ENCODE measurements at regions of chr7 and their contacts with region 1.

Region 1: DNA sequence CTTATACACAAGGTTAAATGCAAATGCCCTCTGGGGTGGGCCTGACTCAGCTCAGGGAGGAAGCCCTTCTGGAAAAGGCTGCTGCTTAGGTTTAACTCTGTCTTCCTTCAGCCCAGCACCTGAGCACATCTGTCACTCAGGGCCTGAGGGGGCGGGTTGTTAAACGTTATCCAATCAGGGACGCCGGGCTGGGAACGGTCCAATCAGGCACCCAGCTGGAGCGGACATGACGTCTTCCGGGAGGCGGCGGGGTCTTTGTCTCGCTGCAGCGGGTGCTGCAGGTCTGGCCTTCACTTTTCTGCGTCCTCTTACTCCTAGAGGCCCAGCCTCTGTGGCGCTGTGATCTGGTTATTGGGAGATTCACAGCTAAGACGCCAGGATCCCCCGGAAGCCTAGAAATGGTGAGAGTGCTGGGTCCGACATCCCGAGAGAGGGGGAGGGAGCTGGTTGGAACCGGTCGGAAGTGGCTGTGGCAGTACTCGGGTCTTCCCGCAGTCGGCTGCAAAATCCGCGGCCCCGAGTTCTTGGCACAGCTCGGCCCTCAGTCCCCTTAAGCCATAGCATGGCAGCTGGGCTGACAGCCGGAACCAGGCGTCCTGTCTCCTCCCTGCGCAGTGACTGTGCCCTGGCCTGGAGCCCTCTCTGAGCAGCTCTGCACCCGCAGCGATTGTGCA is at the start of gene ZNF138:
- DNase-seq: peak; percentile 84 to 97 (median 94)
- ATAC-seq: peak; percentile 98 to 99
- H3K4me3 Mint-ChIP-seq: peak within 1 kb of the TSS; percentile 96 to 99 (median 98)
- H3K27ac Mint-ChIP-seq: peak within 1 kb of the TSS; percentile 94 to 99 (median 99)
- H3K4me1 Mint-ChIP-seq: peaks cover 14 to 39% (median 28%) of the 10 kb centered on the region in 4 donors
- H3K27me3 Mint-ChIP-seq: no peaks in the 10 kb centered on the region
- polyA plus RNA-seq, gene ZNF138: 9.2 to 13.0 (median 12.9) TPM

Region 2: GRCh38 chr7:64665980-64666662 is 128.2 kb before region 1 on chr7 and contains the start of gene ZNF107:
- POLR2A ChIA-PET with region 1: interaction called, 21 read pairs
- DNase-seq: peak; percentile 58 to 94 (median 83)
- ATAC-seq: peak; percentile 95 to 97
- H3K4me3 Mint-ChIP-seq: peak within 1 kb of the TSS; percentile 94 to 99 (median 96)
- H3K27ac Mint-ChIP-seq: peak within 1 kb of the TSS; percentile 96 to 99 (median 98)
- H3K4me1 Mint-ChIP-seq: peaks cover 28 to 66% (median 54%) of the 10 kb centered on the region in 4 donors
- H3K27me3 Mint-ChIP-seq: no peaks in the 10 kb centered on the region
- polyA plus RNA-seq, gene ZNF107: 9.7 to 12.8 (median 11.7) TPM

Region 3: GRCh38 chr7:64902806-64903721 is 108.8 kb after region 1 on chr7 and contains the start of gene ZNF273:
- POLR2A ChIA-PET with region 1: interaction called, 16 read pairs
- DNase-seq: peak; percentile 73 to 96 (median 90)
- ATAC-seq: peak; percentile 99 to 100
- H3K4me3 Mint-ChIP-seq: peak within 1 kb of the TSS; percentile 93 to 98 (median 96)
- H3K27ac Mint-ChIP-seq: peak within 1 kb of the TSS; percentile 90 to 98 (median 97)
- H3K4me1 Mint-ChIP-seq: peaks cover 20 to 57% (median 45%) of the 10 kb centered on the region in 4 donors
- H3K27me3 Mint-ChIP-seq: no peaks in the 10 kb centered on the region
- polyA plus RNA-seq, gene ZNF273: 3.6 to 4.6 (median 4.5) TPM

Region 4: DNA sequence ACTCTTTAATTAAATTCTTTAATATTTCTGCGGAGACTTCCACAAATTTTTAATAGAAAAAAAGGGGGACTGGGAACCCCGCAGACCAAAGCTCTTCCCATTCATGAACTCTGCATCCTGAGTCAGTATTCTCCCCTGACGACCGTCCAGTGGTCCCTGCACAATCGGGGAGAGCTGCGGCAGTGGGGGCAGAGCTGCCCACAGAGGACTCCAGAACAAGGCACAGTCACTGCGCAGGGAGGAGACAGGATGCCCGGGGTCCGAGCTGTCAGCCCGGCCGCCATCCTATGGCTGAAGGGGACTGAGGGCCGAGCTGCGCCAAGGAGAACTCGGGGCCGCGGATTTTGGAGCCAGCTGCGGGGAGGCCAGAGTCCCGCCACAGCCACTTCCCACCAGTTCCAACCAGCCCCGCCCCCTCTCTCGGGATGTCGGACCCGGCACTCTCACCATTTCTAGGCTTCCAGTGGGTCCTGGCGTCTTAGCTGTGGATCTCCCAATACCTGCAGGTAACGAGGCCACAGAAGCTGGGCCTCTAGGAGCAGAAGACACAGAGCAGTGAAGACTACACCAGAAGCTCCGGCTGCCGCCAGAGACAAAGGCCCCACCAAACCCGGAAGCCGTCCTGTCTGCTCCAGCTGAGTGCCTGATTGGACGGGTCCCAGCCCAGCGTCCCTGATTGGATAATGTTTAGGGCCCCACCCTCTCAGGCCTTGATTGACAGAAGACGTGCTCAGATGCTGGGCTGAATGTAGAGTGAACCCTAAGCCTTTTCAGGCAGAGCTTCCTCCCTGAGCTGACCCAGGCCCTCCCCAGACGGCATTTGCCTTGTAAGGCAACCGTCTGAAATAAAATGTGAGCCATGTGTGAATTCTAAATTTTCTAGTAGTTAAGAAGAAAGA is 212.0 kb after region 1 on chr7 and contains the start of gene ERV3-1:
- POLR2A ChIA-PET with region 1: interaction called, 17 read pairs
- DNase-seq: peak; percentile 76 to 98 (median 93)
- ATAC-seq: peak; percentile 98 to 99
- H3K4me3 Mint-ChIP-seq: peak within 1 kb of the TSS; percentile 91 to 98 (median 94)
- H3K27ac Mint-ChIP-seq: peak within 1 kb of the TSS; percentile 91 to 98 (median 96)
- H3K4me1 Mint-ChIP-seq: peaks cover 8 to 55% (median 35%) of the 10 kb centered on the region in 4 donors
- H3K27me3 Mint-ChIP-seq: no peaks in the 10 kb centered on the region
- polyA plus RNA-seq, gene ERV3-1: 6.4 to 6.7 (median 6.4) TPM

Measured in naive thymus-derived CD8-positive, alpha-beta T cell (primary cell).